Ascending aorta (tissue), 2 donors: ENCODE measurements at regions of chr6 and their contacts with region 1.

Region 1: GRCh38 chr6:30066577-30067459 is at the start of gene PPP1R11:
- DNase-seq: peak; percentile 98 to 99
- H3K4me3 ChIP-seq: peak within 1 kb of the TSS; percentile 75 to 77
- H3K27ac ChIP-seq: peak within 1 kb of the TSS; percentile 77 to 85
- H3K4me1 ChIP-seq: peaks cover 4 to 20% of the 10 kb centered on the region in 2 donors
- H3K27me3 ChIP-seq: no peaks in the 10 kb centered on the region
- CTCF ChIP-seq: no peak
- total RNA-seq, gene PPP1R11: 7.1 TPM

Region 2: DNA sequence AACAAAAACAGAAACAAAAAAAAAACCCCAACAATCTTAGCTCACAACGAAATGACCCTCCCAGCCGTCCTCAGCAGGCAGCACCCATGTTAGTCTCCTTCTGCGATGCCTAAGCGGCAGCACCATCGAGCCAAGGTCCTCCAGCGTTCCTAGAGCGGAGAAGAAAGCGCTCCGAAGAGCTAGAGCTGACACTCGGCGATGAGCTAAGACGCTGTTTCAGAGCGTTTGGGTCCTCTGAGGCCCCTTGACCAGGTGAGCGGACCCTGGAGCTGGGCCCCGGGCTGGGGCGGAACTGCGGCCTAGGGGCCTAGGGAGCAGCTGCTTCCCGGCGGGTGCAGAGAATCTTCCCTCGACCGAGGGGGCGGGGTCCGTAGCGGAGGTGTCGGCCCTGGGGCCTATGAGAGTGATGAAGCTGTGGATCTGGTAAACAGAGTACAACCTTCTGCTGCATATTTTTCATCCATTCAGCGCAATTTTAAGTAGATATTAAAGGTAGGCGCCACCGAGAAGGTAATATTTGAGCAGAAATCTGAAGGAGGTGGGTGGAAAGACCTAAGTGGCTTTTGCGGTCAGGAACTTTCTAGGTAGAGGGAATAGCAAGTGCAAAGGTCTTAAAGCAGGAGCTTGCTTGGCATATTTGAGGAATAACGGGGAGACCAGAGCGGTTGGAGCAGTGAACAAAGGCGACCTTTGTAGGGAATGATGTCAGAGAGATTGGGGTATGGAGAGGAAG is 1799.7 kb before region 1 on chr6 and contains the start of gene ZSCAN26:
- intact Hi-C with region 1: loop called (anchors 10 kb)
- DNase-seq: peak; percentile 21 to 89
- H3K4me3 ChIP-seq: peak within 1 kb of the TSS; percentile 70 to 80
- H3K27ac ChIP-seq: peak within 1 kb of the TSS; percentile 76 to 82
- H3K4me1 ChIP-seq: peaks cover 0 to 15% of the 10 kb centered on the region in 2 donors
- H3K27me3 ChIP-seq: no peaks in the 10 kb centered on the region
- CTCF ChIP-seq: no peak
- total RNA-seq, gene ZSCAN26: 2.6 TPM

Region 3: GRCh38 chr6:29723262-29723665 is 343.6 kb before region 1 on chr6 and contains the start of gene HLA-F:
- intact Hi-C with region 1: loop called (anchors 5 kb)
- DNase-seq: peak; percentile 81 to 96
- H3K4me3 ChIP-seq: peak within 1 kb of the TSS; percentile 85 to 94
- H3K27ac ChIP-seq: peak within 1 kb of the TSS; percentile 87 to 93
- H3K4me1 ChIP-seq: peaks cover 12 to 13% of the 10 kb centered on the region in 2 donors
- H3K27me3 ChIP-seq: no peaks in the 10 kb centered on the region
- CTCF ChIP-seq: no peak
- total RNA-seq, gene HLA-F: 75.0 TPM

Region 4: DNA sequence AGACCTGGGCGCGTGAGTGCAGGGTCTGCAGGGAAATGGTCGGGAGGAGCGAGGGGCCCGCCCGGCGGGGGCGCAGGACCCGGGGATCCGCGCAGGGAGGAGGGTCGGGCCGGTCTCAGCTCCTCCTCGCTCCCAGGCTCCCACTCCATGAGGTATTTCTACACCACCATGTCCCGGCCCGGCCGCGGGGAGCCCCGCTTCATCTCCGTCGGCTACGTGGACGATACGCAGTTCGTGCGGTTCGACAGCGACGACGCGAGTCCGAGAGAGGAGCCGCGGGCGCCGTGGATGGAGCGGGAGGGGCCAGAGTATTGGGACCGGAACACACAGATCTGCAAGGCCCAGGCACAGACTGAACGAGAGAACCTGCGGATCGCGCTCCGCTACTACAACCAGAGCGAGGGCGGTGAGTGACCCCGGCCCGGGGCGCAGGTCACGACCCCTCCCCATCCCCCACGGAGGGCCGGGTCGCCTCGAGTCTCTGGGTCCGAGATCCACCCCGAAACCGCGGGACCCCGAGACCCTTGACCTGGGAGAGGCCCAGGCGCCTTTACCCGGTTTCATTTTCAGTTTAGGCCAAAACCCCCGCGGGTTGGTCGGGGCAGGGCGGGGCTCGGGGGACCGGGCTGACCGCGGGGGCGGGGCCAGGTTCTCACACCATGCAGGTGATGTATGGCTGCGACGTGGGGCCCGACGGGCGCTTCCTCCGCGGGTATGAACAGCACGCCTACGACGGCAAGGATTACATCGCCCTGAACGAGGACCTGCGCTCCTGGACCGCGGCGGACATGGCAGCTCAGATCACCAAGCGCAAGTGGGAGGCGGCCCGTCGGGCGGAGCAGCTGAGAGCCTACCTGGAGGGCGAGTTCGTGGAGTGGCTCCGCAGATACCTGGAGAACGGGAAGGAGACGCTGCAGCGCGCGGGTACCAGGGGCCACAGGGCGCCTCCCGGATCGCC is 178.7 kb before region 1 on chr6:
- intact Hi-C with region 1: loop called (anchors 5 kb)
- DNase-seq: peak in 1 of 2 donors; percentile 92
- H3K4me3 ChIP-seq: peak overlapping the region in 1 of 2 donors; percentile 82
- H3K27ac ChIP-seq: peak overlapping the region in 1 of 2 donors; percentile 97
- H3K4me1 ChIP-seq: peaks cover 0 to 5% of the 10 kb centered on the region in 2 donors
- H3K27me3 ChIP-seq: no peaks in the 10 kb centered on the region
- CTCF ChIP-seq: no peak

Region 5: DNA sequence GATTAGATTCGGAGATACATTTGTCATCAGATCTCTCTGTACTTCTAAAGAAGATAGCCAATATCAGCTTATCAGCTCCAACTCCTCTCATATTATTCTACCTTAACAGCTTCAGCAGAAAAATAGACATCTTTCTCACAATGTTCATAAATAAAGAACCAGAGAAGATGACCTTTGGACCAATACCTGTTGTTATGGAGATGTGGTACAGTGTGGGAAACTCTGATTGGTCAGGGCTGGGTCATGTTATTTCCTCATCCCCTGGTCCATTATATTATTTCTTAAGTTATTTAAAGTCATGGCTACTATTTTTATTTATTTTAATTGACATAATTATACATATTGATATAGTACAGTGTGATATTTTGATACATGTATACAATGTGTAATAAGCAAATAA is 41.6 kb before region 1 on chr6:
- intact Hi-C with region 1: no loop called
- DNase-seq: no peak
- H3K4me3 ChIP-seq: no peak overlapping the region
- H3K27ac ChIP-seq: no peak overlapping the region
- H3K4me1 ChIP-seq: no peaks in the 10 kb centered on the region
- H3K27me3 ChIP-seq: no peaks in the 10 kb centered on the region
- CTCF ChIP-seq: no peak

Region 6: GRCh38 chr6:30283761-30284160 is 216.9 kb after region 1 on chr6:
- intact Hi-C with region 1: no loop called
- DNase-seq: no peak
- H3K4me3 ChIP-seq: no peak overlapping the region
- H3K27ac ChIP-seq: no peak overlapping the region
- H3K4me1 ChIP-seq: no peaks in the 10 kb centered on the region
- H3K27me3 ChIP-seq: no peaks in the 10 kb centered on the region
- CTCF ChIP-seq: no peak

Region 7: GRCh38 chr6:30326526-30327260 is 259.9 kb after region 1 on chr6 and contains the start of gene TRIM39:
- intact Hi-C with region 1: loop called (anchors 2 kb)
- DNase-seq: peak; percentile 47 to 93
- H3K4me3 ChIP-seq: peak within 1 kb of the TSS; percentile 76 to 95
- H3K27ac ChIP-seq: peak within 1 kb of the TSS; percentile 97 to 99
- H3K4me1 ChIP-seq: peaks cover 0 to 20% of the 10 kb centered on the region in 2 donors
- H3K27me3 ChIP-seq: no peaks in the 10 kb centered on the region
- CTCF ChIP-seq: no peak
- total RNA-seq, gene TRIM39: 2.8 TPM

Region 8: GRCh38 chr6:30556066-30556905 is 489.5 kb after region 1 on chr6 and contains the start of gene GNL1:
- intact Hi-C with region 1: loop called (anchors 10 kb)
- DNase-seq: peak; percentile 80 to 97
- H3K4me3 ChIP-seq: peak within 1 kb of the TSS; percentile 80 to 85
- H3K27ac ChIP-seq: peak within 1 kb of the TSS; percentile 98 to 100
- H3K4me1 ChIP-seq: peaks cover 5 to 19% of the 10 kb centered on the region in 2 donors
- H3K27me3 ChIP-seq: no peaks in the 10 kb centered on the region
- CTCF ChIP-seq: no peak
- total RNA-seq, gene GNL1: 33.0 TPM